CD14-positive monocyte (primary cell): ENCODE measurements at regions of chr1 and their contacts with region 1.

Region 1: GRCh38 chr1:162561037-162561616 is 395 bp upstream of the UAP1 start:
- DNase-seq: peak; percentile 93 to 95 (median 93)
- H3K4me3 ChIP-seq: peak overlapping the region; percentile 62 to 86 (median 82)
- H3K4me3 Mint-ChIP-seq: peak overlapping the region; percentile 91 to 96
- H3K27ac ChIP-seq: peak overlapping the region; percentile 29 to 85
- H3K27ac Mint-ChIP-seq: peak overlapping the region; percentile 80 to 96 (median 92)
- H3K4me1 ChIP-seq: peaks cover 15 to 18% of the 10 kb centered on the region in 2 donors
- H3K4me1 Mint-ChIP-seq: peaks cover 23% of the 10 kb centered on the region
- H3K27me3 ChIP-seq: no peaks in the 10 kb centered on the region
- H3K27me3 Mint-ChIP-seq: peaks cover 0 to 7% (median 3%) of the 10 kb centered on the region in 3 donors
- CTCF ChIP-seq: no peak

Region 2: GRCh38 chr1:162497723-162498500 is 63.2 kb before region 1 on chr1 and contains the start of gene UHMK1:
- intact Hi-C with region 1: loop called in 1 of 2 experiments (anchors 5 kb)
- DNase-seq: peak; percentile 86 to 90 (median 88)
- H3K4me3 ChIP-seq: peak within 1 kb of the TSS; percentile 83 to 94 (median 94)
- H3K4me3 Mint-ChIP-seq: peak within 1 kb of the TSS; percentile 97 to 98
- H3K27ac ChIP-seq: peak within 1 kb of the TSS; percentile 84 to 94
- H3K27ac Mint-ChIP-seq: peak within 1 kb of the TSS; percentile 89 to 96 (median 95)
- H3K4me1 ChIP-seq: peaks cover 16 to 21% of the 10 kb centered on the region in 2 donors
- H3K4me1 Mint-ChIP-seq: peaks cover 22% of the 10 kb centered on the region
- H3K27me3 ChIP-seq: no peaks in the 10 kb centered on the region
- H3K27me3 Mint-ChIP-seq: peaks cover 0 to 12% (median 6%) of the 10 kb centered on the region in 3 donors
- CTCF ChIP-seq: no peak
- polyA plus RNA-seq, gene UHMK1: 14.9 to 38.2 (median 27.7) TPM